Activated CD8-positive, alpha-beta T cell treated with anti-CD3 and anti-CD28 coated beads, Interleukin-2, amount 10 ng/mL, durations not matched to agents 7 days and 5 days (primary cell): ENCODE measurements at regions of chr3 and their contacts with region 1.

Region 1: DNA sequence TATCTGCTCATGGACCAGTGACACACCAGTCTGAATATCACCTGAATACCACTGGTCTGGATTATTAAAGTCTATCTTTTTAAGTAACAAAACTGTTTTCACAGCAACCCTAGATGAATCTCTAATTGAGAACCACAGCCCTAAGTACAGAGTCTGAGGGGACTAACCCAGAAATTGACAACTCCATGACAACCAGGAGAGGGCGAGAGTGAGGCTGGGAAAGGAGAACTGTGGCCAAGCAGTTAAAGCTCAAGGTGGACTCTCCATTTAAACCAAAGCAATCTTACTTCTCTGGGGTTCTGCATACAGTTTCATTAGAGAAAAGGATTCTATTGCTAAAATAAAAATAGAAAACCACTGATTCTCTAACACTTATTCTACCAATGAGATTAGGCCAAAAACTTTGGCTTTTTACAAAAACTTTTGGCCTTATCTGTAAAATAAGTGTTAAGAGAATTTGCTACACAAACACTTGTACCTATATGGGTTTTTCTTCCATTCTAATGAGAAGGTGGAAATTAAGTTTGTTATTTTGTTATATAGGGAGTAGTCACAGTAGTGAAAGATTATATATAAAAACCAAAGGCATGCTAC is 11.4 kb downstream of the NEK10 start:
- DNase-seq: peak; percentile 77
- ATAC-seq: peak; percentile 91
- H3K4me3 Mint-ChIP-seq: no peak overlapping the region
- H3K27ac Mint-ChIP-seq: no peak overlapping the region
- H3K4me1 Mint-ChIP-seq: peaks cover 29% of the 10 kb centered on the region
- H3K27me3 Mint-ChIP-seq: peaks cover 15% of the 10 kb centered on the region

Region 2: DNA sequence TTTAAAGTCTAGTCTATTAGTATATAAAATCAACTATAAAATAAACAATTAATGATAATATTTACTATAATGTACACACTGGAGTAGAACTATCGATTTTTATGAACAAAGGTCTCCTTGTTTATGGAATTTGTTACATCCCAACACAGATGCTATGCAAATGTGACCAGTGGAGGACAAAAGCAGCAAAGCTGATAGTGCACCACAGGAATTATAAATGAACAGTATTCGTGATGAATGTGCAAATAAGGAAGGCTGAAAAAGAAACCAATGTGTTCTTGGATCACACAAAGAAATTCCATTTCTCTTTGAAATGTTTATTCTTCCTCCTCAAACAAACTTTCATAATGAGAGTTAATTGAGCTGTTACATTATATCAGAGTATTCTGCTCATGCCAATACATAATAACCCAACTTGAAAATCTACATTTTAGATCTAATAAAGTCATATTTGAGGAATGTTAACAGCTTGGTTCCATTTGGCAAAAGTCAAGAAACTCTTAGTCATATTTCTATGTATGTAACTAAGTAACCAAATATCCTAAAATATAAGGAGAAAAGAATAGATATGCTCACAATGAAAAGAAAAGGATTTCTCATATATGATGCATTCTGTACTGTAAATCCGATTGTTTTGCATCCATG is 67.9 kb before region 1 on chr3:
- CTCF ChIA-PET with region 1: no interaction called
- POLR2A ChIA-PET with region 1: no interaction called
- DNase-seq: no peak
- ATAC-seq: no peak
- H3K4me3 Mint-ChIP-seq: no peak overlapping the region
- H3K27ac Mint-ChIP-seq: no peak overlapping the region
- H3K4me1 Mint-ChIP-seq: no peaks in the 10 kb centered on the region
- H3K27me3 Mint-ChIP-seq: no peaks in the 10 kb centered on the region

Region 3: GRCh38 chr3:27345492-27345891 is 12.3 kb before region 1 on chr3:
- CTCF ChIA-PET with region 1: interaction called, 10 read pairs
- POLR2A ChIA-PET with region 1: interaction called, 3 read pairs
- DNase-seq: peak; percentile 42
- ATAC-seq: peak; percentile 85
- H3K4me3 Mint-ChIP-seq: no peak overlapping the region
- H3K27ac Mint-ChIP-seq: no peak overlapping the region
- H3K4me1 Mint-ChIP-seq: peaks cover 15% of the 10 kb centered on the region
- H3K27me3 Mint-ChIP-seq: peaks cover 2% of the 10 kb centered on the region

Region 4: GRCh38 chr3:27368831-27369607 is 11.3 kb after region 1 on chr3 and contains the start of gene NEK10:
- CTCF ChIA-PET with region 1: interaction called, 12 read pairs
- POLR2A ChIA-PET with region 1: interaction called, 3 read pairs
- DNase-seq: peak; percentile 93
- ATAC-seq: peak; percentile 99
- H3K4me3 Mint-ChIP-seq: peak within 1 kb of the TSS; percentile 82
- H3K27ac Mint-ChIP-seq: peak within 1 kb of the TSS; percentile 58
- H3K4me1 Mint-ChIP-seq: peaks cover 14% of the 10 kb centered on the region
- H3K27me3 Mint-ChIP-seq: no peaks in the 10 kb centered on the region
- total RNA-seq, gene NEK10: 0.74 to 0.81 TPM